ENCODE measurements at regions of chr11 and their contacts with region 1.

Region 1: DNA sequence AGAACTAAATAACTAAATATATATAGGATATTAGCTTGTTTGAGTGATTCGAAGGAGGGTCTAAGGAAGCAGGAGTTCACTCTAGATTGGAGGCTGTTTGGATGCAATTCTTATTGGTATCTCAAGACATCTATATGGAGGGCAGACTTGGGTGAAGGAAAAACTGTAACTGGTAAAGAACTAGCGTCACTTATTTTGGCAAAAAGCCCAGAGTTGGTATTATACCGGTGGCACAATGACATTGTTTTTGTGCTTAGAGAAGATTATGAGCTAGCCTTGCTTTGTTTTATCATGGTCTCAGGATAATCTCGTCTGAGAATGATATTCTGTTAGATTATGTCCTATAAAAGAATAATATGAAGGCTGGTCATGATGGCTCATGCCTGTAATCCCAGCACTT is 6.0 kb upstream of the SLC35F2 start:
- DNase-seq: no peak
- CTCF ChIP-seq: no peak

Region 2: DNA sequence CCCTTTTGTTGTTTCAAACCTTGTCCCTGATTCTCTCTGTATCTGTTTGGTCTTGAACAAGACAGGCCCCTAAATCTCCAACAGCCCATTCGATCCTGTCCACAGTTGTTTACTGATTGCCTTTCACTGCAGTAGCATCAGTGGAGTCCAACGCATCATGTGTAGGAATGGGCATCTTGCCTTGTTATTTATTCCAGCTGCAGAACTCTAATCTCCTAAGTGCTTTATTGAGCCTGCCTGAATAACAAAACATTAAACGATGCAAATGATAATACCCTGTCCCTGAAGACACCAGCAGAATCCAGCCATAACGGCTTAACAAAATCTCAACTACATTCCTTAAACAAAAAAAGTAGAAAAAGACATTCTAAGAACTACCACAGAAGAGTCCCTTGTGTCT is 56.1 kb before region 1 on chr11:
- CTCF ChIA-PET with region 1: no interaction called
- POLR2A ChIA-PET with region 1: no interaction called
- DNase-seq: no peak
- CTCF ChIP-seq: no peak

Region 3: DNA sequence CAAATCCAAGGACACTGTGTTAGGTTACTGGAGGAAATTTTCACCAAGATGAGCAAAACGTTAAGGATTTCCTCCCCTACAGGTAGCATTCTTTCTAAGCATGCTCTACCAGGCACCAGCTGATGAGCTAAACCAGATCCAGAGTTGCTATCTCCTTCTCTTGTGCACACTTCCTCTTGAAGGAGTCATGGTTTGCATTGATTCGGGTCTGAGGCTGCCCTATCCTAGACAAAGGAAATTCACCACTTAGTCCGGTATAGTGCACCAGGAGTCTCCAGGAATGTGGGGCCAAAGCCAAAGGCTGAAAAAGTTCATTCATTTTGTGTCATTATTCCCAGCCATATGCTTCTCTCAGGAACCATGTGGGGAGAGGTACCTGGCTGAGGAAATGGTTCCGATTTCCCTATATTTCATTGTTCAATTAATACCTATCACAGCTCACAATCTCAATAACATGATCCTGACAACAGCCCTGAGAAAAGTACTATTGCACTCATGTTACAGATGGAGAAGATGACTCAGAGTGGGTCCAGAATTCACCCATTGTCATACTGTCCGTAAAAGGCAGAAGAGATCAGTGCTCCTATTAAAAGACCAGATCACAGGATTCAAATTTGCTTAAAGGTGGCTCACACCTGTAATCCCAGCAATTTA is 45.1 kb before region 1 on chr11:
- CTCF ChIA-PET with region 1: no interaction called
- POLR2A ChIA-PET with region 1: no interaction called
- DNase-seq: no peak
- CTCF ChIP-seq: no peak

Region 4: GRCh38 chr11:107876141-107876540 is 11.6 kb after region 1 on chr11:
- CTCF ChIA-PET with region 1: interaction called, 12 read pairs
- POLR2A ChIA-PET with region 1: no interaction called
- DNase-seq: no peak
- CTCF ChIP-seq: no peak

Region 5: DNA sequence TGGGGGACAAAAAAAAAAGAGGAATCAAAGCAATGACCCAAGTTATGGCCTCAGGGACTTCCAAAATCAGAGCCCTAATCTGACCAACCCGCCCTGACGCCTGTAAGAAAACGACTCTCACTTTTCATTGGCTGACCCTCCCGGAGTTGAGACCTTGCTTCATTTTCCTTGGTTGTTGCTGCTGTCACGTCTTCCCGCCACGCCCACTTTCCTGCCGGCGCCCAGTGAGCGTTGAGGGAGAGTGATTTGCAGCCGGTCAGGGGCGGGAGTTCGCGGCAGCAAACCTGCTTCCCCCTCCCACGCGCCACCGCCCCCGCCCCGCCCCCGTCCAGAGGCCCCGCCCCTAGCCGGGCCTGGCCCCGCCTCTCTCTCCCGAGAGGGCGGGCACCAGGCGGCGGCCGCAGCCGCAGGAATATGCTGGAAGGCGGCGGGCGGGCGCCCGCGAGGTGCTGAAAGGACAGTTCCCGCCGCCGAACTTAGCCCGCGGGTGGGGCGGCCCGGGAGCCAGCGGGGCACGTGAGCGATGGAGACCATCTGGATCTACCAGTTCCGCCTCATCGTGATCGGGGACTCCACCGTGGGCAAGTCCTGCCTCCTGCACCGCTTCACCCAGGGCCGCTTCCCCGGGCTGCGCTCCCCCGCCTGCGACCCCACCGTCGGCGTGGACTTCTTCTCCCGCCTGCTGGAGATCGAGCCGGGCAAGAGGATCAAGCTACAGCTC is 63.6 kb after region 1 on chr11 and contains the start of gene RAB39A:
- CTCF ChIA-PET with region 1: interaction called, 4 read pairs
- POLR2A ChIA-PET with region 1: interaction called, 10 read pairs
- DNase-seq: peak; percentile 98
- CTCF ChIP-seq: no peak